GM12878 (cell line): ENCODE measurements at regions of chr20 and their contacts with region 1.

Region 1: GRCh38 chr20:34768096-34768495 is 57.4 kb downstream of the NCOA6 start:
- DNase-seq: no peak
- ATAC-seq: no peak
- H3K4me3 ChIP-seq: no peak overlapping the region
- H3K27ac ChIP-seq: no peak overlapping the region
- H3K4me1 ChIP-seq: no peaks in the 10 kb centered on the region; the same call in 1 of the 2 replicates
- H3K27me3 ChIP-seq: no peaks in the 10 kb centered on the region
- CTCF ChIP-seq: no peak
- EP300 ChIP-seq: no peak
- POLR2A ChIP-seq: no peak
- RAD21 ChIP-seq: no peak

Region 2: DNA sequence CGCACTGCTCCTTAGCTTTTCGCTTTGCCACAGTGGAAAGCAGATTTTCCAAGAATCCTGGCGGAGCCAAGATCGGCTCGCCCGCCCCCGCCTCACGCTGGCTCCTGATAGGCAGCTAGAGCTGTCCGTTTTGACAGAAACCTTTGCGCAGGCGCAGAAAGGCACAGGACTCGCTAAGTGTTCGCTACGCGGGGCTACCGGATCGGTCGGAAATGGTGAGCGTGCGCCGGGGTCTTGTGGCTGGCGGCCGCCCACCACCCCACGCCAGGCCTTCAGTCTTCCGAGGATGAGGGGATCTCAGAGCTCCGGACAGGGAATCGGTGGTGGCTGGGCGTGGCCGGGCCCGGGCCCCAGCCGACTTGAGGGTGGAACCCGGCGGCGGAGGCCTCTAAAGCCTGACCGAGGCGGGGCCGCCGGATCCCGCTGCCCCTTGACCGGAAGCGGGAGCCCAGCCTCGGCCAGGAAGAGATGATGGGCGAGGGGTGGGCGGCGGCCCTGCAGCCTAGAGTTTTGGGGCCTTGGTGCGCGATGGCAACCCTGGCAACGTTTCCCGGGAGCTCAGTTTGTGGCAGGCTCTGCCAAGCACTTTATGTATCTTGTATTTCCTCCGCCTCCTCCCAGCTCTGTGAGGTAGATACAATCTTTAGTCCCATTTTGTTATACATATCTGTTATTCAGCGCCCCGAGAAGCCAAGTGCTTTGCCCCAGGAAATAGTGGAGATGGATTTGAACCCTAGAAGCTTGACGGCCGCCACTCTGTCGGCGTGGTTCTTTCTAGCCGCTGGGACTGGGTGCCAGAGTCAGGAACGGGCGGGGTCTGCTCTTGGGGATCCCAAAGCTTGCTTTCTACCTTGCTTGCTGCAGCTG is 251.6 kb before region 1 on chr20 and contains the start of gene DYNLRB1:
- CTCF ChIA-PET with region 1: interaction called, 18 read pairs
- POLR2A ChIA-PET with region 1: no interaction called
- RAD21 ChIA-PET with region 1: interaction called, 5 read pairs
- SMC1A ChIA-PET with region 1: interaction called, 19 read pairs
- in situ Hi-C with region 1: no loop called
- intact Hi-C with region 1: no loop called
- DNase-seq: peak; percentile 68
- ATAC-seq: peak; percentile 91
- H3K4me3 ChIP-seq: peak within 1 kb of the TSS; percentile 82
- H3K27ac ChIP-seq: peak within 1 kb of the TSS; percentile 78
- H3K4me1 ChIP-seq: peaks cover 7% of the 10 kb centered on the region; the same call in 1 of the 2 replicates
- H3K27me3 ChIP-seq: no peaks in the 10 kb centered on the region
- CTCF ChIP-seq: no peak
- EP300 ChIP-seq: no peak
- POLR2A ChIP-seq: peak; percentile 90
- RAD21 ChIP-seq: no peak
- polyA plus RNA-seq, gene DYNLRB1: 185 to 189 TPM

Region 3: GRCh38 chr20:34538671-34539123 is 229.4 kb before region 1 on chr20:
- CTCF ChIA-PET with region 1: interaction called, 93 read pairs
- POLR2A ChIA-PET with region 1: interaction called, 3 read pairs
- RAD21 ChIA-PET with region 1: interaction called, 35 read pairs
- SMC1A ChIA-PET with region 1: interaction called, 32 read pairs
- in situ Hi-C with region 1: loop called (anchors 5 kb)
- intact Hi-C with region 1: loop called (anchors 5 kb)
- DNase-seq: no peak
- ATAC-seq: peak; percentile 85
- H3K4me3 ChIP-seq: no peak overlapping the region
- H3K27ac ChIP-seq: no peak overlapping the region
- H3K4me1 ChIP-seq: peaks cover 4% of the 10 kb centered on the region; the same call in 1 of the 2 replicates
- H3K27me3 ChIP-seq: no peaks in the 10 kb centered on the region
- CTCF ChIP-seq: peak; percentile 78 to 92 (median 88)
- EP300 ChIP-seq: no peak
- POLR2A ChIP-seq: no peak
- RAD21 ChIP-seq: peak; percentile 69

Region 4: GRCh38 chr20:34643919-34644318 is 124.2 kb before region 1 on chr20:
- CTCF ChIA-PET with region 1: interaction called, 5 read pairs
- POLR2A ChIA-PET with region 1: no interaction called
- RAD21 ChIA-PET with region 1: interaction called, 14 read pairs
- SMC1A ChIA-PET with region 1: interaction called, 6 read pairs
- in situ Hi-C with region 1: no loop called
- intact Hi-C with region 1: no loop called
- DNase-seq: no peak
- ATAC-seq: no peak
- H3K4me3 ChIP-seq: no peak overlapping the region
- H3K27ac ChIP-seq: no peak overlapping the region
- H3K4me1 ChIP-seq: no peaks in the 10 kb centered on the region
- H3K27me3 ChIP-seq: no peaks in the 10 kb centered on the region
- CTCF ChIP-seq: no peak
- EP300 ChIP-seq: no peak
- POLR2A ChIP-seq: no peak
- RAD21 ChIP-seq: no peak

Region 5: DNA sequence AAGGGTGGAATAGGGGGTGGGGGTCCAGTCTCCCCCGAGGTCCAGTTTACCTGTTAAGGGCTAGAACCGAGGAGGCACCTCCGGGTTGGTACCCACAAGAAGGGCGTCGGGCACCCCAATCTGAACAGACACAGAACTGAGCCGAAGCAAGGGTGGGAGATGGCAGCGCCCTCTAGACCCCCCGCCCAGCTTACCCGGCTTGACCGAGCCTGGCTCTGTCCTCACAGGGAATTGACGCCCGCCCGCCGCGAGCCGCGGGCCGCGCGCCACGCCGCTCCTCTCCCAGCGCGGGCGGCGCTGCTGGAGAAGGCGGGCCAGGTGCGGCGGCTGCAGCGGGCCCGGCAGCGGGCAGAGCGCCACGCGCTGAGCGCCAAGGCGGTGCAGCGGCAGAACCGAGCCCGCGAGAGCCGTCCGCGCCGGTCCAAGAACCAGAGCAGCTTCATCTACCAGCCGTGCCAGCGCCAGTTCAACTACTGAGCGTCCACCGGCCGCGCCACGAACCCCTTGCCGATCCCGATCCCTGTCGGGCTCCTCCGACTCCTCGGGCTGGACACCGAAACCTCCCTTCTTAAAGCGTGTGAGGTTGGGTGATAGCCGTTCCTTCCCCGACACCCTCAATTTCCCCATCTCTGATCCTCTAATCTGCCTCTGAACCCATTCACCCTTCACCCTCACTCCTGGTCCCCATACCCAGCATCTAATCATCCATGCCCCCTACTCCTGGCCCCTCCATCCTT is 58.1 kb before region 1 on chr20:
- CTCF ChIA-PET with region 1: interaction called, 118 read pairs
- POLR2A ChIA-PET with region 1: interaction called, 5 read pairs
- RAD21 ChIA-PET with region 1: interaction called, 112 read pairs
- SMC1A ChIA-PET with region 1: interaction called, 146 read pairs
- in situ Hi-C with region 1: no loop called
- intact Hi-C with region 1: no loop called
- DNase-seq: no peak
- ATAC-seq: peak; percentile 51
- H3K4me3 ChIP-seq: peak overlapping the region; percentile 91
- H3K27ac ChIP-seq: peak overlapping the region; percentile 86
- H3K4me1 ChIP-seq: peaks cover 23% of the 10 kb centered on the region
- H3K27me3 ChIP-seq: no peaks in the 10 kb centered on the region
- CTCF ChIP-seq: peak; percentile 31 to 47 (median 41); a peak in 5 of 6 replicates
- EP300 ChIP-seq: no peak
- POLR2A ChIP-seq: no peak
- RAD21 ChIP-seq: no peak

Region 6: GRCh38 chr20:34747479-34747878 is 20.6 kb before region 1 on chr20:
- CTCF ChIA-PET with region 1: interaction called, 58 read pairs
- POLR2A ChIA-PET with region 1: interaction called, 5 read pairs
- RAD21 ChIA-PET with region 1: interaction called, 8 read pairs
- SMC1A ChIA-PET with region 1: interaction called, 11 read pairs
- in situ Hi-C with region 1: no loop called
- intact Hi-C with region 1: no loop called
- DNase-seq: no peak
- ATAC-seq: peak; percentile 69
- H3K4me3 ChIP-seq: 0 out of 2 replicates have a peak overlapping the region, but pooled peaks have one; percentile 8
- H3K27ac ChIP-seq: peak overlapping the region; percentile 80
- H3K4me1 ChIP-seq: peaks cover 11% of the 10 kb centered on the region
- H3K27me3 ChIP-seq: no peaks in the 10 kb centered on the region
- CTCF ChIP-seq: no peak
- EP300 ChIP-seq: no peak
- POLR2A ChIP-seq: no peak
- RAD21 ChIP-seq: no peak

Region 7: DNA sequence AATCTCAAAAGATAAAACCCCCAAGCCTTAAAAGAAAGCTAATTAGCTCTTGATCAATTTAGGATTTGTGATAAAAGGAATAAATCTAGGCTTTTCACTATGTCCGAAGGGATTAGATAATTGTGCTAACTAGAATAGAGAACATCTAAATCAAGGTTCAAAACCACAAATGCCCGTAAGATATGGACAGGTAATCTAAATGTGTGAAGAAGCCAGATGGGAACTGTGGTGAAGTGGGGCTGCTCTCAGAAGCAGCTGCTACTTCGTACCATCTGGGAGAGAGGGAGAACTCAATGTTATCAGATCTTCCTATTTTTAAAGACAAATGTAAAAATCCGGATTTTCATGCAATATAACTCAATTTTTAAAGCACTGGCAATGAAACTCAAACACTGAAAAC is 13.1 kb after region 1 on chr20:
- CTCF ChIA-PET with region 1: interaction called, 19 read pairs
- POLR2A ChIA-PET with region 1: no interaction called
- RAD21 ChIA-PET with region 1: interaction called, 4 read pairs
- SMC1A ChIA-PET with region 1: interaction called, 4 read pairs
- in situ Hi-C with region 1: no loop called
- intact Hi-C with region 1: no loop called
- DNase-seq: no peak
- ATAC-seq: no peak
- H3K4me3 ChIP-seq: no peak overlapping the region
- H3K27ac ChIP-seq: no peak overlapping the region
- H3K4me1 ChIP-seq: no peaks in the 10 kb centered on the region
- H3K27me3 ChIP-seq: no peaks in the 10 kb centered on the region
- CTCF ChIP-seq: no peak
- EP300 ChIP-seq: no peak
- POLR2A ChIP-seq: no peak
- RAD21 ChIP-seq: no peak

Region 8: DNA sequence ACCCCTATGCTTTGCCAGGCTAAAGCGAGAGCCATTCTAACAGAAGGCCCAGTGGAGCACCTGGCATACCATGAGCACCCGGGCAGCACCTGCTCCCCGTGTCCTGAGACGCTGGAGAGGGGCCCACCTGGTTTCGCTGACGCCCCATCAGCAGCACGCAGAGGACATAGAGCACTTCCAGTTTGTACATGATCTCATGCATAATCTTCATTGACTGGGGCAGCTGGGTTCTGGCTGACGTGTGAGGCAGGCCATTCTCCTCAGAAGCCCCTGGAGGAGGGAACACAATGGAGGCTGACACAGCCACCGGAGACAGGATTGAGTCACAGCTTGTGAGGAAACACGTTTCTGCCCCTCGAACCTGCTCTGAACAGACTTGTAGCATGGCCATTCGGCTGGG is 253.0 kb after region 1 on chr20:
- CTCF ChIA-PET with region 1: no interaction called
- POLR2A ChIA-PET with region 1: no interaction called
- RAD21 ChIA-PET with region 1: no interaction called
- SMC1A ChIA-PET with region 1: no interaction called
- in situ Hi-C with region 1: no loop called
- intact Hi-C with region 1: no loop called
- DNase-seq: no peak
- ATAC-seq: no peak
- H3K4me3 ChIP-seq: no peak overlapping the region
- H3K27ac ChIP-seq: no peak overlapping the region
- H3K4me1 ChIP-seq: no peaks in the 10 kb centered on the region
- H3K27me3 ChIP-seq: no peaks in the 10 kb centered on the region
- CTCF ChIP-seq: no peak
- EP300 ChIP-seq: no peak
- POLR2A ChIP-seq: no peak
- RAD21 ChIP-seq: no peak